ENCODE measurements at regions of chr11 and their contacts with region 1.

Region 1: GRCh38 chr11:130636722-130637517 is 188.5 kb downstream of the ADAMTS15 start:
- DNase-seq: peak; percentile 99
- ATAC-seq: peak; percentile 66
- H3K4me3 ChIP-seq: peak overlapping the region; percentile 48
- H3K27ac ChIP-seq: peak overlapping the region; percentile 97
- H3K4me1 ChIP-seq: peaks cover 64% of the 10 kb centered on the region
- H3K27me3 ChIP-seq: no peaks in the 10 kb centered on the region
- CTCF ChIP-seq: no peak

Region 2: DNA sequence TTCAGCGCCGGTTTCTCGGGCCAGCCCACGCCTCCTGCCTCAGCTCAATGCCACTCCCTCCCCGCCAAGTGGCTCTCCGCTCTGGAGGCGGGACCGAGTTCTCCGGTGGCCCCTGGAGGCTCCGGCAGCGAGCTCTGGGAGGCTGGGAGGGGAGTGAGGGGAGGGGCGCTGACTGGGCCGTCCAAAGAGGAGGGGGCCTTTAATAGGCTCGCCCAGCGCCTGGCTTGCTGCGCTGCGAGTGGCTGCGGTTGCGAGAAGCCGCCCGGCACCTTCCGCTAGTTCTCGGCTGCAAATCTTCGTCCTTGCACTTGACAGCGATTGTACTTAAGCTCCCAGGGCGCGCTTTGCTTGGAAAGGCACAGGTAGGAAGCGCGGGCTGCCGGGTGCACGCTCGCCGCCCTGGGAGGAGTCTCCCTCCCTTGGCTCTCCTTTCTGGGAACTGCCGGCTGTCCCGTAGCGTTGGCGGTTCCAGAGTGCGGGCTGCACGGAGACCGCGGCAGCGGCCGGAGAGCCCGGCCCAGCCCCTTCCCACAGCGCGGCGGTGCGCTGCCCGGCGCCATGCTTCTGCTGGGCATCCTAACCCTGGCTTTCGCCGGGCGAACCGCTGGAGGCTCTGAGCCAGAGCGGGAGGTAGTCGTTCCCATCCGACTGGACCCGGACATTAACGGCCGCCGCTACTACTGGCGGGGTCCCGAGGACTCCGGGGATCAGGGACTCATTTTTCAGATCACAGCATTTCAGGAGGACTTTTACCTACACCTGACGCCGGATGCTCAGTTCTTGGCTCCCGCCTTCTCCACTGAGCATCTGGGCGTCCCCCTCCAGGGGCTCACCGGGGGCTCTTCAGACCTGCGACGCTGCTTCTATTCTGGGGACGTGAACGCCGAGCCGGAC is 188.3 kb before region 1 on chr11 and contains the start of gene ADAMTS15:
- CTCF ChIA-PET with region 1: interaction called, 4 read pairs
- POLR2A ChIA-PET with region 1: interaction called, 6 read pairs
- intact Hi-C with region 1: loop called (anchors 1 kb)
- DNase-seq: peak; percentile 97
- ATAC-seq: peak; percentile 91
- H3K4me3 ChIP-seq: peak within 1 kb of the TSS; percentile 94
- H3K27ac ChIP-seq: peak within 1 kb of the TSS; percentile 52
- H3K4me1 ChIP-seq: peaks cover 34% of the 10 kb centered on the region
- H3K27me3 ChIP-seq: no peaks in the 10 kb centered on the region
- CTCF ChIP-seq: no peak
- total RNA-seq, gene ADAMTS15: 16.8 and 21.7 TPM in 2 replicates

Region 3: GRCh38 chr11:130580372-130580771 is 56.5 kb before region 1 on chr11:
- CTCF ChIA-PET with region 1: no interaction called
- POLR2A ChIA-PET with region 1: no interaction called
- intact Hi-C with region 1: loop called (anchors 2 kb)
- DNase-seq: peak; percentile 94
- ATAC-seq: peak; percentile 93
- H3K4me3 ChIP-seq: no peak overlapping the region
- H3K27ac ChIP-seq: peak overlapping the region; percentile 84
- H3K4me1 ChIP-seq: peaks cover 30% of the 10 kb centered on the region
- H3K27me3 ChIP-seq: no peaks in the 10 kb centered on the region
- CTCF ChIP-seq: no peak

Region 4: DNA sequence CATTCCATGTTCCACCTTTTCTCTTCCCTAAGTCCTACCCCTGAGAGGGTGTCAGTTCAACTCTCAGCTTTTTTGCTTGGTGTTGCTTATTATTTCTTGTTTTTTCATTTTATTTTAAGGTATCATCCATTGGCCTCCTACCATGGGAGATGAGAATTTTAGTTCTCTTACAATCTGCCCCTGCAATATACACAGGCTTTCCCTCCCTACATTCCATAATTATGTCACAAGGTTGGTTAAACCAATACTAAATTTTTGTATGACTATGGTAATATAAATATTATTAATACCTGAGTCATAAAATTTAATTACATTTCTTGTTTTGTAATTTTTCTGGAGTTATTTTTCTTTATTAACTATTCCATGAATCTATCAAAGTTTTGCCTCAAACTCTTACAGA is 63.2 kb after region 1 on chr11:
- CTCF ChIA-PET with region 1: no interaction called
- POLR2A ChIA-PET with region 1: interaction called, 3 read pairs
- intact Hi-C with region 1: loop called (anchors 2 kb)
- DNase-seq: peak; percentile 25
- ATAC-seq: peak; percentile 92
- H3K4me3 ChIP-seq: no peak overlapping the region
- H3K27ac ChIP-seq: no peak overlapping the region
- H3K4me1 ChIP-seq: peaks cover 7% of the 10 kb centered on the region; the same call in 1 of the 2 replicates
- H3K27me3 ChIP-seq: no peaks in the 10 kb centered on the region
- CTCF ChIP-seq: no peak

Region 5: GRCh38 chr11:130798280-130798679 is 161.4 kb after region 1 on chr11:
- CTCF ChIA-PET with region 1: interaction called, 3 read pairs
- POLR2A ChIA-PET with region 1: no interaction called
- intact Hi-C with region 1: loop called (anchors 1 kb)
- DNase-seq: peak; percentile 99
- ATAC-seq: peak; percentile 79
- H3K4me3 ChIP-seq: no peak overlapping the region
- H3K27ac ChIP-seq: peak overlapping the region; percentile 90
- H3K4me1 ChIP-seq: peaks cover 53% of the 10 kb centered on the region
- H3K27me3 ChIP-seq: no peaks in the 10 kb centered on the region
- CTCF ChIP-seq: no peak

Region 6: DNA sequence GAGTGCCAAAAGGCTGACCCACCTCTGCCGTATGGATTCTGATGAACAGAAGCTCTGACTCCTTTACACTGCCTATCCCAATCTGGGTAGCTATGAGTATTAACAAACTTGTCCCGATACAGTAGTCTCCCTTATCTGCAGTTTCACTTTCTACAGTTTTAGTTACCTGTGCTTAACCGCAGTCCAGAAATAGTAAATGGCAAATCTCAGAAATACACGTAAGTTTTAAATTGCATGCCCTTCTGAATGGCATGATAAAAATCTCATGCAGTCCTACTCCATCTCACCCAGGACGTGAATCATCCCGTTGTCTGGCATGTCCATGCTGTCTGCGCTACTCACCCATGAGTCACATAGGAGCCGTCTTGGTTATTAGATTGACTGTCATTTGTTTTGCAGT is 210.6 kb after region 1 on chr11:
- CTCF ChIA-PET with region 1: no interaction called
- POLR2A ChIA-PET with region 1: no interaction called
- intact Hi-C with region 1: loop called (anchors 5 kb)
- DNase-seq: peak; percentile 99
- ATAC-seq: peak; percentile 92
- H3K4me3 ChIP-seq: peak overlapping the region; percentile 57
- H3K27ac ChIP-seq: peak overlapping the region; percentile 97
- H3K4me1 ChIP-seq: peaks cover 53% of the 10 kb centered on the region
- H3K27me3 ChIP-seq: no peaks in the 10 kb centered on the region
- CTCF ChIP-seq: no peak